CD4-positive, alpha-beta memory T cell (primary cell): ENCODE measurements at regions of chr3 and their contacts with region 1.

Region 1: DNA sequence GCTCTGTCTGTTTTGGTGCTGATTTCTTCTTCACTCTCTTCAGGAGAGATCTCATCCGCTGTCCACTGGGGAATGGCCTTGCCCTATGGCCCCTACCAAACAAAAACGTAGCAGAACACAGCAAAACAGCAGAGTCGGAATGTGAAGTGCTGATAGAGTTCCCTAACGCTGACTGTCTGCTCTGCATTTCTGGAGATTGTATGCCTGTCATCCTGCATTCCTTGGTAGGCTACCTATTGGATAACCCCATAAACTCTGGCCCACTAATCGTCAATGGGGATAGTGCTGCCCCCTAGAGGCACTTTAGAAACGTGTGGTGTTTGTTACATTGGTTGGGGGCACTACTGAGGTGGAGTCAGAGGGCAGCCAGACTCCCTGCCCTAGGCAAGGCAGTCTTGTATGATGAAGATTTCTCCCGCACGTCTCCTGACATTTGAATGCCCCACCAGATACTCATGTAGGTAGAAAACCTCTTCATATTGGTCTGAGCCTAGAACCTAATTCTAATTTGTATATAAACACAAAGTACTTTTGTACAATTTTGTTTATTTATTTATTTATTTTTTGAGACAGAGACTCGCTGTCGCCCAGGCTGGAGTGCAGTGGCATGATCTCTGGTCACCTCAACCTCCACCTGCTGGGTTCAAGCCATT is 15.6 kb upstream of the MAGEF1 start:
- DNase-seq: peak; percentile 31 to 45 (median 39)
- H3K4me3 ChIP-seq: no peak overlapping the region
- H3K4me3 Mint-ChIP-seq: no peak overlapping the region
- H3K27ac ChIP-seq: no peak overlapping the region
- H3K27ac Mint-ChIP-seq: no peak overlapping the region
- H3K4me1 ChIP-seq: no peaks in the 10 kb centered on the region
- H3K4me1 Mint-ChIP-seq: no peaks in the 10 kb centered on the region
- H3K27me3 ChIP-seq: no peaks in the 10 kb centered on the region
- H3K27me3 Mint-ChIP-seq: peaks cover 5 to 10% of the 10 kb centered on the region in 2 donors

Region 2: GRCh38 chr3:184737641-184738535 is 10.4 kb after region 1 on chr3:
- CTCF ChIA-PET with region 1: interaction called, 20 read pairs
- POLR2A ChIA-PET with region 1: no interaction called
- intact Hi-C with region 1: no loop called
- DNase-seq: no peak
- H3K4me3 ChIP-seq: no peak overlapping the region
- H3K4me3 Mint-ChIP-seq: no peak overlapping the region
- H3K27ac ChIP-seq: no peak overlapping the region
- H3K27ac Mint-ChIP-seq: no peak overlapping the region
- H3K4me1 ChIP-seq: no peaks in the 10 kb centered on the region
- H3K4me1 Mint-ChIP-seq: no peaks in the 10 kb centered on the region
- H3K27me3 ChIP-seq: no peaks in the 10 kb centered on the region
- H3K27me3 Mint-ChIP-seq: peaks cover 3 to 5% of the 10 kb centered on the region in 2 donors

Region 3: GRCh38 chr3:184777336-184778004 is 50.0 kb after region 1 on chr3:
- CTCF ChIA-PET with region 1: interaction called, 21 read pairs
- POLR2A ChIA-PET with region 1: no interaction called
- intact Hi-C with region 1: loop called (anchors 1 kb)
- DNase-seq: peak; percentile 75 to 86 (median 76)
- H3K4me3 ChIP-seq: no peak overlapping the region
- H3K4me3 Mint-ChIP-seq: no peak overlapping the region
- H3K27ac ChIP-seq: no peak overlapping the region
- H3K27ac Mint-ChIP-seq: no peak overlapping the region
- H3K4me1 ChIP-seq: no peaks in the 10 kb centered on the region
- H3K4me1 Mint-ChIP-seq: peaks cover 0 to 4% (median under 1%) of the 10 kb centered on the region in 4 donors
- H3K27me3 ChIP-seq: no peaks in the 10 kb centered on the region
- H3K27me3 Mint-ChIP-seq: peaks cover 14 to 30% of the 10 kb centered on the region in 2 donors